ENCODE measurements at regions of chr20 and their contacts with region 1.

Region 1: GRCh38 chr20:1555952-1556351 is 1.6 kb downstream of the SIRPD start:
- DNase-seq: peak in 4 of 10 donors; percentile 3 to 31 (median 24)
- ATAC-seq: peak in 1 of 2 donors; percentile 63
- H3K4me3 Mint-ChIP-seq: no peak overlapping the region
- H3K27ac Mint-ChIP-seq: peak overlapping the region in 2 of 10 donors; percentile 27 to 63
- H3K4me1 Mint-ChIP-seq: peaks cover 2 to 16% (median 7%) of the 10 kb centered on the region in 4 donors
- H3K27me3 Mint-ChIP-seq: peaks cover 0 to 5% (median 0%) of the 10 kb centered on the region in 5 donors

Region 2: GRCh38 chr20:1524004-1524403 is 31.9 kb before region 1 on chr20:
- POLR2A ChIA-PET with region 1: no interaction called
- DNase-seq: no peak
- ATAC-seq: no peak
- H3K4me3 Mint-ChIP-seq: no peak overlapping the region
- H3K27ac Mint-ChIP-seq: peak overlapping the region in 1 of 10 donors; percentile 11
- H3K4me1 Mint-ChIP-seq: peaks cover 4 to 18% (median 6%) of the 10 kb centered on the region in 4 donors
- H3K27me3 Mint-ChIP-seq: peaks cover 0 to 4% (median 0%) of the 10 kb centered on the region in 5 donors

Region 3: GRCh38 chr20:1535420-1536175 is 20.4 kb before region 1 on chr20:
- POLR2A ChIA-PET with region 1: no interaction called
- DNase-seq: no peak
- ATAC-seq: no peak
- H3K4me3 Mint-ChIP-seq: no peak overlapping the region
- H3K27ac Mint-ChIP-seq: peak overlapping the region in 1 of 10 donors; percentile 53
- H3K4me1 Mint-ChIP-seq: peaks cover 4 to 39% (median 13%) of the 10 kb centered on the region in 4 donors
- H3K27me3 Mint-ChIP-seq: no peaks in the 10 kb centered on the region

Region 4: GRCh38 chr20:1734269-1734858 is 178.4 kb after region 1 on chr20:
- POLR2A ChIA-PET with region 1: interaction called, 10 read pairs
- DNase-seq: peak in 8 of 10 donors; percentile 6 to 70 (median 38)
- ATAC-seq: peak; percentile 75 to 82
- H3K4me3 Mint-ChIP-seq: peak overlapping the region in 5 of 10 donors; percentile 28 to 61 (median 33)
- H3K27ac Mint-ChIP-seq: peak overlapping the region in 6 of 10 donors; percentile 29 to 96 (median 46)
- H3K4me1 Mint-ChIP-seq: peaks cover 1 to 40% (median 17%) of the 10 kb centered on the region in 4 donors
- H3K27me3 Mint-ChIP-seq: peaks cover 0 to 2% (median 0%) of the 10 kb centered on the region in 5 donors